Uterus (tissue), 4 donors: ENCODE measurements at regions of chr1 and their contacts with region 1.

Region 1: DNA sequence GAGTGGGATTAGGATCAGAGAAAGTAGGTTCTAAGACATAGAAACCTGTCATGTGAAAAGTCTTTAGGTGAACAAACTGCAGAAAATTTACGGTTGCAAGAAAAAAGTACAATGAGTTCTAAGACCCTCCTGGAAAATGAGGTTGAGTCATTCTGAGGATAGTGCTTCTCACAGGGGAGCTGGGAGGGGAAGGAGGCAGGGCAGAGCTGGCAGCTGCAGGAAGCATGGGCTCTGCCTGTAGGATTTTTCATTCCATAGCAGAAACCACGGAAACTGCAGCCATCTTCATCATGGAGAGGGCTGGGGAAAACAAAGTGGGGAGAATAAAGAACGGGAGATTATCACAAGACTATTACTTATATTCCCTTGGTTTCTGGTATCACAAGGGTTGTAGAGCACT is 25.8 kb upstream of the THEM4 start:
- DNase-seq: no peak
- H3K4me3 ChIP-seq: no peak overlapping the region
- H3K27ac ChIP-seq: no peak overlapping the region
- H3K4me1 ChIP-seq: no peaks in the 10 kb centered on the region
- H3K27me3 ChIP-seq: no peaks in the 10 kb centered on the region
- CTCF ChIP-seq: no peak
- POLR2A ChIP-seq: no peak

Region 2: GRCh38 chr1:151994956-151995355 is 59.8 kb after region 1 on chr1:
- intact Hi-C with region 1: loop called (anchors 5 kb)
- DNase-seq: peak; percentile 26 to 27
- H3K4me3 ChIP-seq: no peak overlapping the region
- H3K27ac ChIP-seq: no peak overlapping the region
- H3K4me1 ChIP-seq: peaks cover 0 to 11% of the 10 kb centered on the region in 2 donors
- H3K27me3 ChIP-seq: no peaks in the 10 kb centered on the region
- CTCF ChIP-seq: no peak
- POLR2A ChIP-seq: no peak

Region 3: GRCh38 chr1:152440635-152441471 is 505.7 kb after region 1 on chr1:
- intact Hi-C with region 1: no loop called
- DNase-seq: peak; percentile 17 to 38
- H3K4me3 ChIP-seq: no peak overlapping the region
- H3K27ac ChIP-seq: no peak overlapping the region
- H3K4me1 ChIP-seq: peaks cover 0 to 9% of the 10 kb centered on the region in 2 donors
- H3K27me3 ChIP-seq: no peaks in the 10 kb centered on the region
- CTCF ChIP-seq: peak; percentile 43 to 58 (median 51)
- POLR2A ChIP-seq: no peak